ENCODE measurements at regions of chr12 and their contacts with region 1.

Region 1: DNA sequence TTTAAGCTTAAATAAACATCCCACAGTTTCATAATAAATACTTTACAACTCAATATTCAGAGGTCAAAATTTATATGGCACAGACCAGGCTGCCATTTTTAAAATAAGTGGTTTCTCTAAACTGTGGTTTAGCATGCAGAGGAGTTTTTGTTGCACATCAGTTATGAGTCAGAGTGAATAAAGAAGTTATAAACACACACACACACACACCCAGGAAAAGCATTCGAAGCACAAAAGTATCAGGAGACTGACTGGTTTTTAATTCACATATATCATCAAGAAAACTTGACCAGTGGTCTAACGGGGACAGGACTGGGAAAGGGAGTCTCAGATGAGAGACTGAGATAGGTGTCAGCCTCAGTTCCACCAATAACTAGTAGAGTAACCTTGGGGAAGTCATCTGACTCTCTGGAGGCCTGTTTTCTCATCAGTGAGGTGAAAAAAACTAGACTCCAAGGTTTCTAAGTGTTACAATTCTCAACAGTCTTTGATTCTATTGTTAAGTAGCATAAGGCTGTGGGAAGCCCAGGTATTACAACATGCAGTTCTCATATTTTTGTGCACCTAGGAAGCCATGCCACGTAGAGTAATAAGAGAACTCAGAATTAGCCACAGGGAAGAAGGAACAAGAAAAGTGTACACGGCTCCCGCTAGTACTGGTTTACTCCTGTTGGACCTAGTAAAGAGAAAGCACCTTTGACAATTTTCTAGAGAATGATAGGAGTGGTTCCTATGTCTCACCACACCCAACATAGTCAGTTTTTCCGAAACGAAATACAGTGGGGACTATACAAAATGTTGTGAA is 5.2 kb downstream of the PPTC7 start:
- DNase-seq: peak; percentile 72
- H3K4me3 Mint-ChIP-seq: peak overlapping the region; percentile 58
- H3K27ac Mint-ChIP-seq: peak overlapping the region; percentile 98
- H3K4me1 Mint-ChIP-seq: peaks cover 75% of the 10 kb centered on the region
- H3K27me3 Mint-ChIP-seq: no peaks in the 10 kb centered on the region

Region 2: DNA sequence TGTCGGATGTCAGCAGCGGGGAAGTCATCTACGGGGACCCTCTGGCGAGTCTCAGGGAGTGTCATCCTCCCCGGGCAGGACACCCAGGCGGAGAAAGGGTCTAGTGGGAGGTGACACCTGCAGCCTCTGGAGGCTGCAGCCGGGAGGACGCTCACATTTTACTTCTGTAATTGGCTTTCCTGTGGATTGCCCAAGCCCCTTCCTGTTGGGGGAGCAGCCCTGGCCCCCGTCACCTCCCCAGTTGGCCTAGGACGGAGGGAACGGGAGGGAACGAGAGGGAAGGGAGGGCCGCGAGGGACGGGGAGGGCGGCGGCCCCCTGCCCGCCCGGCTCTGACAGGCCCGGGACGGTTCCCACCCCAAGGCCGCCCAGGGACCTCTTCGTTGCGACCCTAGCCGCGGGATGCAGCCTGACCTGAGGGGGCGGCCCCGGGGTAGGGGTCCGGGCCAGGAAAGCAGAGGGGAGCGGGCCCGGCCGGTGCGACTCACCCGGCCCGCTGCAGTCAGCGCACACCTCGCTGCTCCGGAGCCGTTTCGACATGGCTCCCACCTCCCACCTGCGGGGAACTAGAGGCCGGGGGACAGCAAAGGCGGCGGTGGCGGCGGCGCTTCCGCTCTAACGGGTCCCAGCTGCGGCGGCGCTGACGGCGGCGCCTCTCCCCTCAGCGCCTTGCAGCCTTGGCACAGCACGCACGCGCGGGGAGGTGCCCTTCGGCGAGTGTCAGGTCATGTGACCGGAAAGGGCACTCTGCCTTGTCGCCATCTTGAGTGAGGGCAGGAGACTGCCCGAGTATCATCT is 582.0 kb before region 1 on chr12 and contains the start of gene GIT2:
- CTCF ChIA-PET with region 1: no interaction called
- intact Hi-C with region 1: loop called (anchors 1 kb)
- DNase-seq: peak; percentile 96
- H3K4me3 Mint-ChIP-seq: peak within 1 kb of the TSS; percentile 94
- H3K27ac Mint-ChIP-seq: peak within 1 kb of the TSS; percentile 93
- H3K4me1 Mint-ChIP-seq: peaks cover 54% of the 10 kb centered on the region
- H3K27me3 Mint-ChIP-seq: no peaks in the 10 kb centered on the region
- total RNA-seq, gene GIT2: 40.2 to 41.6 TPM

Region 3: DNA sequence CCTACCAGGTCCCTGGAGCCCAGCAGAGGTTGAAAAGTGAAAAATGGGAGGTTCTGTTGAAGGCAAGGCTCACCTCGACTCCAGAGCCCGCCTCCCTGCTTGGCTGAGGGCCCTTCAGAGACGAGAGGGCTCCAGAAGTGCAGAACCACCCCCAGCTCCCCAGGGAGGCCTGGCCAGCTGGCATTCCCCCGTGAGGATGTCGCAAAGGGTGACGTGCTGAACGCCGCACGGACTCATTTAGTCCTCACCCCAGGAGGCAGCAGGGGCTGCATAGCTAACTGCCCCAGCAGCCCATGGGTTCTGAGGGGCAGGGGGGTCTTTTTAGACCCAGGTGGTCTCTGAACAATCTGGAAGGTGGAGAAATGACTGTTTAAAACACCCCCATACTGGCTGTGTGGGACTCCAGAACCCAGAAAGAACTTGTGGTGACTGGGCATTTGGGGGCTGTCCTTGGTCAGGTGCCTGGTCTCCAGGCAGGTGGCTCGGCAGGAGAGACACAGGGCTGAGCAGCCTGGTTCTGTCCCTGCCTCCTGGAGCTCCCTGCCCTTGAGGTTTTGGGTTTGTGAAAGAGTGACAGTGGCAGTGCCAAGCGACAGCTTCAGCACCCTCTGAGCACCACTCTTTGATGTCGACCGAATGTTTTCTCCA is 206.4 kb before region 1 on chr12:
- CTCF ChIA-PET with region 1: no interaction called
- intact Hi-C with region 1: no loop called
- DNase-seq: no peak
- H3K4me3 Mint-ChIP-seq: no peak overlapping the region
- H3K27ac Mint-ChIP-seq: no peak overlapping the region
- H3K4me1 Mint-ChIP-seq: no peaks in the 10 kb centered on the region
- H3K27me3 Mint-ChIP-seq: no peaks in the 10 kb centered on the region

Region 4: GRCh38 chr12:110501752-110502738 is 75.9 kb before region 1 on chr12 and contains the starts of genes RAD9B and VPS29:
- CTCF ChIA-PET with region 1: no interaction called
- intact Hi-C with region 1: loop called (anchors 1 kb)
- DNase-seq: peak; percentile 100
- H3K4me3 Mint-ChIP-seq: peak within 1 kb of the TSS; percentile 94
- H3K27ac Mint-ChIP-seq: peak within 1 kb of the TSS; percentile 96
- H3K4me1 Mint-ChIP-seq: peaks cover 32% of the 10 kb centered on the region
- H3K27me3 Mint-ChIP-seq: no peaks in the 10 kb centered on the region
- total RNA-seq, gene RAD9B: 1.1 to 1.5 TPM
- total RNA-seq, gene VPS29: 76.6 to 81.8 TPM

Region 5: DNA sequence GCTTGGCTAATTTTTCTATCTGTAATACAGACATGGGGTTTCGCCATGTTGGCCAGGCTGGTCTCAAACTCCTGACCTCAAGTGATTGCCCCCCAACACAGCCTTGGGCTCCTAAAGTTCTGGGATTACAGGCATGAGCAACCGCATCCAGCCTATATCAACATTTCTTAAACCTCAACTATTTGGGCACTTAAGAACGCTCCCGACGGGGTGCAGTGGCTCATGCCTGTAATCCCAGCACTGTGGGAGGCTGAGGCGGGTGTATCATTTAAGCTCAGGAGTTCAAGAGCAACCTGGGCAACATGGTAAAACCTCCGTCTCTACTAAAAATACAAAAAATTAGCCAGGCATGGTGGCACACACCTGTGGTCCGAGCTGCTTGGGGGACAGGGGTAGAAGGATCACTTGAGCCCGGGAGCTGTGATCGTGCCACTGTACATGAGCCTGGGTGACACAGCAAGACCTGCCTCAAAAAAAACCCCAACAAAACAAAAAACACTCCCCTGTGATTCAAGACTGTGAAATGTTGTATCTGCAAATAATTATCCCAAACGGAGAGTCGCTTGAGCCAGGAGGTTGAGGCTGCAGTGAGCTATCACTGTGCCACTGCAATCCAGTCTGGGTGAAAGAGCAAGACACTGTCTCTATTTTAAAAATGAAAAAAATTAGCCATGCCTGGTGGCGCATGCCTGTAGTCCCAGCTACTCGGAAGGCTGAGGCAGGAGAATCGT is 16.3 kb before region 1 on chr12:
- CTCF ChIA-PET with region 1: interaction called, 7 read pairs
- intact Hi-C with region 1: loop called (anchors 1 kb)
- DNase-seq: no peak
- H3K4me3 Mint-ChIP-seq: peak overlapping the region; percentile 41
- H3K27ac Mint-ChIP-seq: peak overlapping the region; percentile 85
- H3K4me1 Mint-ChIP-seq: peaks cover 84% of the 10 kb centered on the region
- H3K27me3 Mint-ChIP-seq: no peaks in the 10 kb centered on the region

Region 6: GRCh38 chr12:110742718-110743570 is 165.0 kb after region 1 on chr12 and contains the start of gene PPP1CC:
- CTCF ChIA-PET with region 1: no interaction called
- intact Hi-C with region 1: loop called (anchors 2 kb)
- DNase-seq: peak; percentile 93
- H3K4me3 Mint-ChIP-seq: peak within 1 kb of the TSS; percentile 99
- H3K27ac Mint-ChIP-seq: peak within 1 kb of the TSS; percentile 98
- H3K4me1 Mint-ChIP-seq: peaks cover 37% of the 10 kb centered on the region
- H3K27me3 Mint-ChIP-seq: no peaks in the 10 kb centered on the region
- total RNA-seq, gene PPP1CC: 280 to 285 TPM

Region 7: DNA sequence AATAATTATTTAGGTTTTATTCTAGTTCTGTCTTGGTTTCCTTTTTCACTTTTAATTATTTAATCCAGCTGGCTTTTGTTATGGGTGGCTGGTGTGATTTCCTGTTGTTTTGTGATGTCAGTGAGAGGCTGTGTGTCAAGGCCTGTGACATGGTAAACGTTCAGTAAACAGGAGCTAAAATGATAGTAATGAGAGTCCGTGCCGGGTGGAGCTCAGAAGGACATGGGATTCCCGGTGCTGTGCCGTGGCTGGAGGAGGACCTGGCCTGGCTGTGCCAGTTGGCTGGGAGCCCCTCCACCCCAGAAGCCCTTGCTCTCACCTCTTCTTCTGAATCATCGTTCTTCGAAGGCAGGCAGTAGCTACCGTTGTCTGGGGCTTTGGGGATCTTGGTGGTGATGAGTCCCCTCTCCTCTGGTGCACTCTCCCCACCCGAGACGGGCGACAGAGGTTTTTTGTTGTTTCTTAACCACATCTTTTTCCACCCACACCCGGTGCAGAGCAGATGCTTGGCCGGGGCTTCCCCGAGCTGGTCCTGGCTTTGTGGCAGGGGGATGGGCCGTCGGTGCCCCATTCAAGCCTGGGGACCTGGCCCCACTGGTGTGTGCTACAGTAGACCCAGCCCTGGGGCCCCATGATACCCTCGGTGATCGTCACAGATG is 856.9 kb after region 1 on chr12:
- CTCF ChIA-PET with region 1: no interaction called
- intact Hi-C with region 1: loop called (anchors 5 kb)
- DNase-seq: peak; percentile 89
- H3K4me3 Mint-ChIP-seq: peak overlapping the region; percentile 56
- H3K27ac Mint-ChIP-seq: peak overlapping the region; percentile 92
- H3K4me1 Mint-ChIP-seq: peaks cover 91% of the 10 kb centered on the region
- H3K27me3 Mint-ChIP-seq: no peaks in the 10 kb centered on the region

Measured in activated naive CD4-positive, alpha-beta T cell treated with anti-CD3 and anti-CD28 coated beads for 36 hours (primary cell).